ENCODE measurements at regions of chr14 and their contacts with region 1.

Region 1: GRCh38 chr14:70622111-70622712 is 19.5 kb upstream of the TTC9 start:
- DNase-seq: no peak
- ATAC-seq: peak; percentile 93
- H3K4me3 ChIP-seq: no peak overlapping the region
- H3K27ac ChIP-seq: no peak overlapping the region
- H3K4me1 ChIP-seq: no peaks in the 10 kb centered on the region
- H3K27me3 ChIP-seq: no peaks in the 10 kb centered on the region
- CTCF ChIP-seq: peak; percentile 87 to 91 (median 90)
- EP300 ChIP-seq: no peak
- POLR2A ChIP-seq: no peak
- RAD21 ChIP-seq: peak; percentile 97

Region 2: DNA sequence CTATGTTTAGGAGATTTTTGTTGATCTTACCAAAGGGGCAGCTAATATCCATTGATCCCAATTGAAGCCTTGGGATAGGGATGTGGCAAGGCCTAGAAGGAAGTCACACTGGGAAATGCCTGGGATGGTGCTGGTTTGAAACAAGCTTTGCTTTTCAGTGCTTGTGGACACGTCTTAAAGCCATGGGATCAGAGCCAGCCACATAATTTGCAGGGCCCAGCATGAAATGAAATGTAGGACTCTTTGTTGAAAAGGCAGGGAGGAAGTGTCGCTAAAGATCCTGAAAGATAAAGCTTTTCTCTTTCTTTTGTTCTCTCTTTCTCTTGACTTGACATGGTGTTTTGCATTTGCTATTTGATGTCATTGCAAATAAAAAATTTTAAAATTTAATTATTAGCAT is 24.5 kb after region 1 on chr14:
- CTCF ChIA-PET with region 1: interaction called, 7 read pairs
- POLR2A ChIA-PET with region 1: interaction called, 5 read pairs
- RAD21 ChIA-PET with region 1: interaction called, 6 read pairs
- SMC1A ChIA-PET with region 1: interaction called, 16 read pairs
- in situ Hi-C with region 1: no loop called
- intact Hi-C with region 1: no loop called
- DNase-seq: no peak
- ATAC-seq: no peak
- H3K4me3 ChIP-seq: peak overlapping the region; percentile 90
- H3K27ac ChIP-seq: peak overlapping the region; percentile 24; the same call in 1 of the 2 replicates
- H3K4me1 ChIP-seq: peaks cover 4% of the 10 kb centered on the region
- H3K27me3 ChIP-seq: no peaks in the 10 kb centered on the region
- CTCF ChIP-seq: no peak
- EP300 ChIP-seq: no peak
- POLR2A ChIP-seq: no peak
- RAD21 ChIP-seq: no peak

Region 3: GRCh38 chr14:70655110-70655826 is 33.1 kb after region 1 on chr14:
- CTCF ChIA-PET with region 1: interaction called, 3 read pairs
- POLR2A ChIA-PET with region 1: no interaction called
- RAD21 ChIA-PET with region 1: interaction called, 5 read pairs
- SMC1A ChIA-PET with region 1: interaction called, 11 read pairs
- in situ Hi-C with region 1: no loop called
- intact Hi-C with region 1: no loop called
- DNase-seq: peak; percentile 88
- ATAC-seq: peak; percentile 87
- H3K4me3 ChIP-seq: peak overlapping the region; percentile 61
- H3K27ac ChIP-seq: peak overlapping the region; percentile 99
- H3K4me1 ChIP-seq: peaks cover 73% of the 10 kb centered on the region
- H3K27me3 ChIP-seq: no peaks in the 10 kb centered on the region
- CTCF ChIP-seq: no peak
- EP300 ChIP-seq: peak in 1 of 2 experiments; percentile 21; a peak in 1 of 4 replicates
- POLR2A ChIP-seq: 0 out of 2 replicates have a peak, but pooled peaks have one; percentile 35
- RAD21 ChIP-seq: no peak

Region 4: DNA sequence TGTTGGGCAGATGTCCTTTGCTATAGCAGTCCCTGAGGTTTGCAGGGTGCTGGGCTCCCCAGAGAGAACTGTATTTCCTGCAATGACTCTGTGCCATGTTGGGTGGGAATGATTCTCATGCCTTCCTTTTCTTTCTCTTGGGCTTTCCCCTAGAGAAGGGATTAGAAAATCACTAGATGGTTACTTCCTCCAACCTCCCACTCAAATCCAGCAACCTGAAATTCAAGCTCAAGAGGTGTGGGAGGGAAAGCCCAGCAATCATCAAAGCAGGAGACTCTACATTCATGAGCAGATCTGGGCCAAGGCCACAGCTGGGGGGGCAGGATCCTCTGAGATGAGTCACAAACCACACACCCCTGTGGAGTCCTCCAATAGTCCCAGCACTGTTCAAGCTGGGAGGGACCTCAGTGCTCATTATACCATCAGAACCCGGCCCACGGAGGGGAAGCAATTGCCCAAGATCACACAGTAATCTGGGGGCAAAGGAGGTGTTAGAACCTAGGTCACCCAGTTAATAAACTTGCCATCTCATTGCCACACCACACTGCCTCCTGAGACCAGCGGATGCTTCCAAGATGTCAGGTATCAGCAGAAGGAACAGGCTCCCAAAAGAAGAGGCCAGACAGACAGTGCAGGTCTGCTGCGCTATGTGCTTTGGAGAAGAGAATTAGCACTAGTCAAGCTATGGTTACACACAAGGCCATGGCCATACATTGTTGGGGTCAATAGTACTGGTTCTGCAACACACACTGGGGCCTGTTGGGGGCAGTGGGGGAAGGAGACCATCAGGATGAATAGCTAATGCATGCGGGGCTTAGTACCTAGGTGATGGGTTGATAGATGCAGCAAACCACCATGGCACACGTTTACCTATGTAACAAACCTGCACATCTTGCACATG is 85.2 kb after region 1 on chr14:
- CTCF ChIA-PET with region 1: interaction called, 138 read pairs
- POLR2A ChIA-PET with region 1: interaction called, 3 read pairs
- RAD21 ChIA-PET with region 1: interaction called, 58 read pairs
- SMC1A ChIA-PET with region 1: interaction called, 135 read pairs
- in situ Hi-C with region 1: loop called (anchors 5 kb)
- intact Hi-C with region 1: no loop called
- DNase-seq: peak; percentile 93
- ATAC-seq: peak; percentile 97
- H3K4me3 ChIP-seq: no peak overlapping the region
- H3K27ac ChIP-seq: peak overlapping the region; percentile 76
- H3K4me1 ChIP-seq: peaks cover 20% of the 10 kb centered on the region
- H3K27me3 ChIP-seq: no peaks in the 10 kb centered on the region
- CTCF ChIP-seq: no peak
- EP300 ChIP-seq: peak; percentile 37 to 50; a peak in 1 of 4 replicates
- POLR2A ChIP-seq: no peak
- RAD21 ChIP-seq: 0 out of 2 replicates have a peak, but pooled peaks have one; percentile 2

Region 5: DNA sequence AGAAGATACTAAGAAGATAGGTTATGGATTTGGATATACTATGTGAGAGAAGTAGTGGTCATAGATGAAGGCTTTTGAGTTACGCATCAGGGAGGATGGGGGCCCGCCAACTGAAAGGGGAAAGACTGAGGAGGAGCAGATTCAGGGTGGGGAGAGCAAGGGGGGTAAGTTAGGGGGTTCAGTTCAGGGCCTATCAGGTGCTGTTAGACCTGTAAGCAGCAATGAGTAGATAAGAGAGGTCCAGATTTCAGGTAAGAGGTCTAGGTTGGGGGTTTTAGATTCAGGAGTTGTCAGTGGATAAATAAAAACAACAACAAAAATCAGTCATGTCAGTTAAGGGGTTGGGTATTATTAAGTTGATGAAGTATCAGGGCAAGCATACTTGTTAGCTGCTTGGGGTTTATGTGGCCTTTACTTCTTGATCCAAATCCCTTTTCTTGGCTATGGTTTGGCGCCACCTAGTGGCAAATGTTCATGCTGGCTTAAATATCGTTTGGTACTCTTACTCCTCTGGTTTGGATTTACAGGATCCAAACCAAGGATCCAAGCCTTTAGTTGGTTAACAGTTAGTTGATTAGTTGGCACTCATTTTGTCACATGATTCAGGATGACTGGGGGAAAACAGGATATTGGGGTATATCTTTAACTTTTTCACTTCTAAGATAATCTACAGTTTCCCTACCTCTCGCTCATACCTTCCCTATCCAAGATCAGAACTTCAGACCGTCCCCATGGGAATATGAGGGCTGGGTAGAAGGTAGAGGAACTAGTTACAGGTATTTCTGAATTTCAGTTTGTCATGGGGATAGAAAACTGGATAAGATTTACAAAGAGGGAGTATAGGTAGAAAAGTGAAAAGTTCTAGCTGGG is 350.1 kb after region 1 on chr14:
- CTCF ChIA-PET with region 1: interaction called, 6 read pairs
- POLR2A ChIA-PET with region 1: no interaction called
- RAD21 ChIA-PET with region 1: no interaction called
- SMC1A ChIA-PET with region 1: no interaction called
- in situ Hi-C with region 1: no loop called
- intact Hi-C with region 1: loop called (anchors 10 kb)
- DNase-seq: peak; percentile 44
- ATAC-seq: peak; percentile 94
- H3K4me3 ChIP-seq: no peak overlapping the region
- H3K27ac ChIP-seq: no peak overlapping the region
- H3K4me1 ChIP-seq: no peaks in the 10 kb centered on the region
- H3K27me3 ChIP-seq: no peaks in the 10 kb centered on the region
- CTCF ChIP-seq: peak; percentile 79 to 91 (median 83)
- EP300 ChIP-seq: no peak
- POLR2A ChIP-seq: no peak
- RAD21 ChIP-seq: peak; percentile 92